Activated CD8-positive, alpha-beta memory T cell treated with anti-CD3 and anti-CD28 coated beads, Interleukin-2, amount 10 ng/mL, durations not matched to agents 7 days and 5 days (primary cell): ENCODE measurements at regions of chr21 and their contacts with region 1.

Region 1: GRCh38 chr21:17925000-17925610 is 105.9 kb upstream of the C21orf91 start:
- DNase-seq: peak; percentile 71
- ATAC-seq: peak; percentile 98
- H3K4me3 Mint-ChIP-seq: no peak overlapping the region
- H3K27ac Mint-ChIP-seq: no peak overlapping the region
- H3K4me1 Mint-ChIP-seq: no peaks in the 10 kb centered on the region
- H3K27me3 Mint-ChIP-seq: peaks cover 4% of the 10 kb centered on the region

Region 2: DNA sequence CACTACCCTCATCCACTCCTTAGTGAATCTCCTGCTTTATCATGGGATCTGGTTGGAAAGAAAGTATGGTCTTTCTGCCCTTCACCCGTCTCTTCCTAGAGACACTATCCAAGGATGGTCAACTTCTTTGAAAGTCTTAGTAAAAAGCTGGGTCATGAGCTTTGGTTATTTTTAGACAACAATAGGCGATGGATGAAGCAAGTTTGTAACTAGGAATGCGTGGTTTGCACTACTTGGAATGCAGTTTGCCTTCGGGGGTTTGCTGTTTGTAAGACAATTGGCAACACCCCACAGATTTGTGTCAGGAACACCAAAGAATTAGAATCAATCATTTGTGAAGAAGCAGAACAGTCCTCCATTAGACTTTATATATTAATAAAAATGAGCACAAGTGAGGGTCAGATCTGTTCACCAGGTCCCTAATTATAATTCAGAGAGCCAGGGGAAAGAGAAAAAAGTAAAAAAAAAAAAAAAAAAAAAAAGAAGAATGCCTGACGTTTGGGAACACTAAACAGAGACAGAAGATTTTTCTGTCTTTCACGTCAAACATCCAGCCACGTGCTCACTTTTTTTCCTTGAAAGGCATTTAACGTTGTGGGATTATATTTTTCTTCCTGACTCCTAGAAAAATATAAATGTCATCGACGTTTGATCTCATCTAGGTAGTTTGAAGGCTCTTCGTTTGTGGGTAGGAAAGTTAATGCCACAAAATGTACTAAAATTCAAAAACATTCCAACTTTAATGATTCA is 251.7 kb before region 1 on chr21:
- CTCF ChIA-PET with region 1: interaction called, 17 read pairs
- DNase-seq: no peak
- ATAC-seq: no peak
- H3K4me3 Mint-ChIP-seq: no peak overlapping the region
- H3K27ac Mint-ChIP-seq: no peak overlapping the region
- H3K4me1 Mint-ChIP-seq: no peaks in the 10 kb centered on the region
- H3K27me3 Mint-ChIP-seq: peaks cover 13% of the 10 kb centered on the region

Region 3: GRCh38 chr21:17679002-17679600 is 246.0 kb before region 1 on chr21:
- CTCF ChIA-PET with region 1: interaction called, 17 read pairs
- DNase-seq: no peak
- ATAC-seq: peak; percentile 85
- H3K4me3 Mint-ChIP-seq: no peak overlapping the region
- H3K27ac Mint-ChIP-seq: no peak overlapping the region
- H3K4me1 Mint-ChIP-seq: no peaks in the 10 kb centered on the region
- H3K27me3 Mint-ChIP-seq: no peaks in the 10 kb centered on the region

Region 4: DNA sequence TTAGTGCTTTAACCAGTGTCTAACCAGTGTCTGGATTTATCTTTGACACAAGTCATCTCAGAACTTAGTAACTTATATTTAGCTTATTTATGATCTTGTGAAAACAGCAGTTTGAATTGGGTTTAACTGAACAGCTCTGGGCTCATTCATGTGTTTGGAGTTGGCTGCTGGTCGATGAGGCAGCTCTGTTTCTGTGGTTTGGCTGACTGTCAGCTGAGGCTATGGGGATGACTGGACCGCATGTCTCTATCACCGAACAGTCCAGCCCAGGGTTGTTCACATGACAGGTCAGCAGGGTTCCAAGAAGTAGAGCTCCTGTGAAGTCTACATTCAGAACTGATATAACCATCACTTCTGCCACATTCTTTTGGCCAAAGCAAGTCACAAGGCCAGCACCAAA is 76.9 kb before region 1 on chr21:
- CTCF ChIA-PET with region 1: no interaction called
- DNase-seq: no peak
- ATAC-seq: no peak
- H3K4me3 Mint-ChIP-seq: no peak overlapping the region
- H3K27ac Mint-ChIP-seq: no peak overlapping the region
- H3K4me1 Mint-ChIP-seq: peaks cover 3% of the 10 kb centered on the region
- H3K27me3 Mint-ChIP-seq: no peaks in the 10 kb centered on the region

Region 5: GRCh38 chr21:17903029-17903806 is 21.9 kb before region 1 on chr21:
- CTCF ChIA-PET with region 1: interaction called, 14 read pairs
- DNase-seq: no peak
- ATAC-seq: peak; percentile 58
- H3K4me3 Mint-ChIP-seq: no peak overlapping the region
- H3K27ac Mint-ChIP-seq: no peak overlapping the region
- H3K4me1 Mint-ChIP-seq: peaks cover 7% of the 10 kb centered on the region
- H3K27me3 Mint-ChIP-seq: peaks cover 2% of the 10 kb centered on the region

Region 6: DNA sequence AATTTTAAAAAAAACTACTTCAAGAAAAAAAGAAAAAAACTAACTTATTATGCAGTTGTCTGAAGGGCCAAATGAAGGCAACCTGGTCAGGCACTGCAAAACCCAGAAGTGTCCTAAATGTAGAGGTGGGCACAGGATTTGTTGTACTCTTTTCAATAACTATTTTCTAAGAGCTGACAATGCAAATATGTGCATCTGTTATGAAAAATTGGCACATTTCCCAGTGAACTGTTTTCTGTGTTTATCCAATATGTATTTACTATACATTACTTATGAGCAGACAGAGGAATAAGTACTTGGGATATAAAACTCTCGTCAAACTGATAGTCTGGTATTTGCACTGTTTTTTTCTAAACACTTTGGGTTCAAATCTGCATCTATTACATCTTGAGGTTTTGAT is 82.0 kb after region 1 on chr21:
- CTCF ChIA-PET with region 1: no interaction called
- DNase-seq: no peak
- ATAC-seq: no peak
- H3K4me3 Mint-ChIP-seq: no peak overlapping the region
- H3K27ac Mint-ChIP-seq: no peak overlapping the region
- H3K4me1 Mint-ChIP-seq: no peaks in the 10 kb centered on the region
- H3K27me3 Mint-ChIP-seq: no peaks in the 10 kb centered on the region